Naive thymus-derived CD4-positive, alpha-beta T cell (primary cell): ENCODE measurements at regions of chr20 and their contacts with region 1.

Region 1: DNA sequence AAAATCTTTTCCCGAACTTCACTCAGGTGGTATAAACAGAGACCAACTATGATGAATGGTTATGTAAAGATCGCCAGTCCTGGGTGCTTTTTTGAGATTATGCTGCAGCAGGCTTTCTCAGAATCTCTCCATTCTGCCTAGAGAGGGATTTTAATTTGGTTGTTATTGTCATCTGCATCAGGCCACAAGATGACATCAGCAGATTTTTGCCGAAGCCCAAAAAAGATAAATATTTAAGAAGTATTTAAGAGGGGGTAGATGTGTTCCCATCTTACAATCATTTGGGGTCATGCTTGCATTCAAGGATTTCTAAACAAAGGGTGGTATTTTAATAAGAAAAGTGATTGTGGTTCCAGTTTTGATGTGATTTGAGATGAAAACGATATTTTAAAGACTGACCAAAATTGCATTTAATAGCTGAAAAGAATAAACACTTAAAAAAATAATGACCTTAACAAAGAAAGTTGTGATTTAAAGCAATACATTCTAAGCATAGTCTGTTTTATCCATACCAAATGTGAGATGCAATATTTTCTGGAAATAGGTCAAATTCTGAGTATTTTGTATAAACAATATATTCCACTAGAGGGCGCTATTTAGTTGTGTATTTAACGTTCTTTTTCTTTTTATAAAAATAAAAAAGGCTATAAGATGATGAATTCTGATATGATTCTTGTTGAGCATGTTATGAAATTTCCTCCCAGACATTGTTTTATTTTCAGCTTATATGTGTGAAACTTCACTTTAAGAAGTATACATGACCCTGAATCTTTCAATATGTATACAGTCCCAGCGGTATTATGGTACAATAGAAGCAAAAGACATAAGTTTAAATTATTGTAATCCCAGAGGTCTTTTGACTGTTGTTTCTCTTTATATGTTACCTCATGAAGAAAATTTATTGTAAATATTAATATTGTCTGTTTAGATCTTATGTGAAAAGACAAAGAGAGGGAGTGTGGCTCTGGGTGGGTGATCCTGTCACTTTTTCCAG is 51.0 kb upstream of the ZFP64 start:
- DNase-seq: peak in 6 of 9 donors; percentile 26 to 59 (median 45)
- ATAC-seq: peak; percentile 34
- H3K4me3 ChIP-seq: no peak overlapping the region
- H3K4me3 Mint-ChIP-seq: no peak overlapping the region
- H3K27ac ChIP-seq: no peak overlapping the region
- H3K27ac Mint-ChIP-seq: peak overlapping the region in 1 of 9 donors; percentile 22
- H3K4me1 ChIP-seq: no peaks in the 10 kb centered on the region
- H3K4me1 Mint-ChIP-seq: peaks cover 0 to 11% (median 2%) of the 10 kb centered on the region in 7 donors
- H3K27me3 ChIP-seq: no peaks in the 10 kb centered on the region
- H3K27me3 Mint-ChIP-seq: peaks cover 0 to 11% (median 2%) of the 10 kb centered on the region in 5 donors

Region 2: GRCh38 chr20:52209154-52209571 is 33.4 kb before region 1 on chr20:
- CTCF ChIA-PET with region 1: no interaction called
- POLR2A ChIA-PET with region 1: no interaction called
- intact Hi-C with region 1: no loop called
- DNase-seq: no peak
- ATAC-seq: no peak
- H3K4me3 ChIP-seq: no peak overlapping the region
- H3K4me3 Mint-ChIP-seq: no peak overlapping the region
- H3K27ac ChIP-seq: no peak overlapping the region
- H3K27ac Mint-ChIP-seq: no peak overlapping the region
- H3K4me1 ChIP-seq: no peaks in the 10 kb centered on the region
- H3K4me1 Mint-ChIP-seq: peaks cover 0 to 5% (median 0%) of the 10 kb centered on the region in 7 donors
- H3K27me3 ChIP-seq: no peaks in the 10 kb centered on the region
- H3K27me3 Mint-ChIP-seq: peaks cover 11 to 31% (median 25%) of the 10 kb centered on the region in 5 donors

Region 3: GRCh38 chr20:52379723-52380336 is 137.3 kb after region 1 on chr20:
- CTCF ChIA-PET with region 1: no interaction called
- POLR2A ChIA-PET with region 1: no interaction called
- intact Hi-C with region 1: loop called (anchors 1 kb)
- DNase-seq: peak in 6 of 9 donors; percentile 13 to 35 (median 22)
- ATAC-seq: no peak
- H3K4me3 ChIP-seq: no peak overlapping the region
- H3K4me3 Mint-ChIP-seq: peak overlapping the region in 1 of 10 donors; percentile 14
- H3K27ac ChIP-seq: no peak overlapping the region
- H3K27ac Mint-ChIP-seq: peak overlapping the region in 5 of 9 donors; percentile 6 to 71 (median 45)
- H3K4me1 ChIP-seq: peaks cover 0 to 14% of the 10 kb centered on the region in 2 donors
- H3K4me1 Mint-ChIP-seq: peaks cover 0 to 47% (median 25%) of the 10 kb centered on the region in 7 donors
- H3K27me3 ChIP-seq: no peaks in the 10 kb centered on the region
- H3K27me3 Mint-ChIP-seq: peaks cover 0 to 2% (median 0%) of the 10 kb centered on the region in 5 donors

Region 4: GRCh38 chr20:53032478-53032932 is 790.0 kb after region 1 on chr20:
- CTCF ChIA-PET with region 1: no interaction called
- POLR2A ChIA-PET with region 1: no interaction called
- intact Hi-C with region 1: loop called in 1 of 2 experiments (anchors 1 kb)
- DNase-seq: no peak
- ATAC-seq: no peak
- H3K4me3 ChIP-seq: no peak overlapping the region
- H3K4me3 Mint-ChIP-seq: no peak overlapping the region
- H3K27ac ChIP-seq: no peak overlapping the region
- H3K27ac Mint-ChIP-seq: peak overlapping the region in 3 of 9 donors; percentile 11 to 42 (median 31)
- H3K4me1 ChIP-seq: peaks cover 0 to 19% of the 10 kb centered on the region in 2 donors
- H3K4me1 Mint-ChIP-seq: peaks cover 22 to 70% (median 51%) of the 10 kb centered on the region in 7 donors
- H3K27me3 ChIP-seq: no peaks in the 10 kb centered on the region
- H3K27me3 Mint-ChIP-seq: peaks cover 0 to 7% (median 0%) of the 10 kb centered on the region in 5 donors

Region 5: DNA sequence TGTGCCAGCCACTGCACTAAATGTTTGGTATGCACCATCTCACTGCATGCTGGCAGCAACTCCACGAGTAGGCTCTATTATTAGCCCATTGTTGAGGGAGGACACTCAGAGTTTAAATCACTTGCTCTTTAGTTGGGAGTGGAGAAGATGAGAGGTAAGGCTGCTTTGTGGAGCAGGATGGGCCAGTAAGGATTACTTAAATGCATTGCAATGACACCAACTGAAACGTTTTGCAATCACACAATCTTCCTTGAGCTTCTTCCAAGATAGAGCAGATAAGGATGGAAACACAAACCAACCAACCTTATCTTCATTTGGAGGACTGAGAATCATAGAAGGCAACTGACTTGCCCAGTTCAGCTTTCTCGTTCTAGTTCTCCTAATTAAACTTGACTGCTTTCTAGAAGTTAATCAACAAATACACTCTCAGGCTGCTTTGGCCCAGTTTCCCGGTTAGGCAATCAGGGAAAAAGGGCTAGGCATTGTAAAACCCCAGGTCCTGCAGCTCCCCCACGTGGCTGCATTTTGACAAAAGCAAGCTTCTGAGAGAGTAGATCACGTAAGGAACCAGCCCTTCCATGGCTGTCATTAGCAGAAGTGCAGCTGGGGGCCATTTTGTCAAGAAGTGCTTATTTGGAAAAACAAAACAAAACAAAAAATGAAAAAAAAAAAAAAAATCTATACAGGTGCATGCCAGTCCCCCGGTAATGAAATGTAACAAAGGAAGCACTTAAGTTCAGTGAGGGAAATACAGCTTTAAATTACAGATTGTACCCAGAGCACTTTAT is 1697.2 kb after region 1 on chr20:
- CTCF ChIA-PET with region 1: interaction called, 3 read pairs
- POLR2A ChIA-PET with region 1: no interaction called
- intact Hi-C with region 1: loop called (anchors 5 kb)
- DNase-seq: peak; percentile 35 to 62 (median 48)
- ATAC-seq: peak; percentile 82
- H3K4me3 ChIP-seq: no peak overlapping the region
- H3K4me3 Mint-ChIP-seq: peak overlapping the region in 3 of 10 donors; percentile 24 to 44 (median 30)
- H3K27ac ChIP-seq: no peak overlapping the region
- H3K27ac Mint-ChIP-seq: peak overlapping the region in 6 of 9 donors; percentile 2 to 79 (median 22)
- H3K4me1 ChIP-seq: peaks cover 15 to 24% of the 10 kb centered on the region in 2 donors
- H3K4me1 Mint-ChIP-seq: peaks cover 26 to 62% (median 44%) of the 10 kb centered on the region in 7 donors
- H3K27me3 ChIP-seq: no peaks in the 10 kb centered on the region
- H3K27me3 Mint-ChIP-seq: no peaks in the 10 kb centered on the region

Region 6: DNA sequence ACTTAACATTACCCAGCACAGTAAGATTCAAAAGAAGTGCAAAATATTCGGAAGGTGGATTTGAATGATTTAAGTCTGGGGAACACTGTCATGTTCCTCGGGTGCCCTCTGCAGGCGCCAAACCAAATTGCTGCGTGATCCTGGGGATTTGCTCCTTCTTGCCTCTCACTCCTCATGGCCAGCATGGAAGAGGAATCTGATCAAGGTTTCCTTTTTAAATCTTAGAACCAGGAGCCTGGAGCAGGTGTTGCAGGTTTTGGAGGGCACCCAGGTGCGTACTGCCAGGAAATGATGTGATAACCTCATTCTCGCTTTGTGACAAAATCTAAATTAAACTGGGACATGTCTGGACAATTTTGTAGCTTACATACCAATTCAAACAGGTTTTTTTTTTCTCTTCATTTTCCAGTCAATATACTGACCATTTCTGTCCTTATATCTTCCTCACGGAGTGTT is 1957.2 kb after region 1 on chr20:
- CTCF ChIA-PET with region 1: no interaction called
- POLR2A ChIA-PET with region 1: no interaction called
- intact Hi-C with region 1: loop called in 1 of 2 experiments (anchors 1 kb)
- DNase-seq: peak; percentile 32 to 69 (median 53)
- ATAC-seq: peak; percentile 78
- H3K4me3 ChIP-seq: no peak overlapping the region
- H3K4me3 Mint-ChIP-seq: no peak overlapping the region
- H3K27ac ChIP-seq: no peak overlapping the region
- H3K27ac Mint-ChIP-seq: no peak overlapping the region
- H3K4me1 ChIP-seq: no peaks in the 10 kb centered on the region
- H3K4me1 Mint-ChIP-seq: peaks cover 0 to 4% (median 0%) of the 10 kb centered on the region in 7 donors
- H3K27me3 ChIP-seq: no peaks in the 10 kb centered on the region
- H3K27me3 Mint-ChIP-seq: peaks cover 0 to 4% (median 0%) of the 10 kb centered on the region in 5 donors